Activated T-helper 2 cell treated with anti-CD3 and anti-CD28 coated beads, Interferon-gamma antibody, Interleukin-2, Interleukin-4, amounts not matched to agents 10 μg/mL and 5 μg/mL and 100 μg/mL, durations not matched to agents 14 hours and 24 hours and 36 hours (primary cell): ENCODE measurements at regions of chr4 and their contacts with region 1.

Region 1: DNA sequence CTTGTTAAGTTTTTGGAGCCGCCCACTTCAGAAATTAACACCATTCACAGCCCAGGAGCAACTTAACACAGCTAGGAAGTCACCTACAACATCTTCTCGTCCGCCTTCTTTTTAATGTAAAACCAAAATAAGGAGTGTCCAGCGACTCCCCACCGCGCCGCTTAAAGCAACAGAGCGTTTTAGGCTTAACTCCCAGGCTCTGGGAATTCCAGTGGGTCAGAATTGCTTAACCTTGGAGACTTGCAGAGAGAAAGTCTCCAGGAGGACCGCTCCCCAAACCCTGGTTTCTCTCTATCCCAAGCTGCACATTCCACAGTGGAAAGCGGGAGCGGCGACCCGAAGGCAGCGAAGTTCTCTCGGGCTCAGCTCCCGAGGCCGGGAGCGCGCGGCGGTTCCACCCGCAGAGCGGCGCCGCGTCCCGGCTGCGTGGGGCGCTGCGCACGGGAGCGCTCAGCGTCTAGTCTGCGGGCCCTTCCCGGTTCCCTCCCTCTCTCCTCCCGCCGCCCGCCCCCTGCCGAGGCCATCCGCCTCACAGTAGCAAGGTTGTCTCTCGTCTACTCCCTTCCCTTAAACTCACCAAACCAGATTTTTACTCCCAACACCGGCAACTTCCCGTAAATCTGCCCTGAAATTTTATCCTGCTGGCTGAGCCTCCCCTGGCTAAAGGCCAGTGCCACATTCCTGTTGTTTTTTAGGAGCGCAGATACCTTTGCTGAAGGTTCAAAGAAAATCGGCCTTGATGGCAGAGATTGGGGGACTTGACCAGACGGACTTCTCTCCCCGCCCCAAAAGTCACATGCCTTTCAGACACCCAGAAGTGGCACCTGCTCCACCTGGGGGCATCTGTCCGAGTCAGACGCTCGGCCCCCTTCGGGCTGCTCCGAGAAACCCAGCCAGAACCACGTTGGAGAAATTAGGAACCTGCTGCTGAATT is at the start of gene RBM47:
- DNase-seq: no peak
- H3K4me3 Mint-ChIP-seq: peak within 1 kb of the TSS; percentile 98
- H3K27ac Mint-ChIP-seq: peak within 1 kb of the TSS; percentile 90
- H3K4me1 Mint-ChIP-seq: peaks cover 41% of the 10 kb centered on the region
- H3K27me3 Mint-ChIP-seq: peaks cover 9% of the 10 kb centered on the region
- total RNA-seq, gene RBM47: 32.9 and 34.8 TPM in 2 replicates

Region 2: DNA sequence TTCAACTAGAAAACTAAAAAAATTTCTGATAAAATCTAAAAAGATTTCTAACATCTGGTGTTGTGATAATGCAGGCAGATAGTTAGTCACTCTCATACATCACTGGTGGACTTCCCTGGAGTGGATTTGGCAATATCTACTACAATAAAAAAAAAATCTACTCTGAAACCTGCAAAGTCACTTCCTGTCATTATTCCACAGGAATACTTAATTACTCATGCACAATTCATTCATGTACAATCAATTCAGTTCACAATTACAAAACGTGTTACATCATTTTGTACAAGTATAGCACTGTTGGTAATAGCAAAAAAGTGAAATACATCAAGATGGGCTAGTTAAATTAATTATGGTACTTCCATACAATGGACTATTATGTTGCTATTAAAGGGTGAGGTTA is 449.3 kb before region 1 on chr4:
- intact Hi-C with region 1: loop called (anchors 5 kb)
- DNase-seq: no peak
- H3K4me3 Mint-ChIP-seq: no peak overlapping the region
- H3K27ac Mint-ChIP-seq: no peak overlapping the region
- H3K4me1 Mint-ChIP-seq: peaks cover 29% of the 10 kb centered on the region
- H3K27me3 Mint-ChIP-seq: no peaks in the 10 kb centered on the region

Region 3: DNA sequence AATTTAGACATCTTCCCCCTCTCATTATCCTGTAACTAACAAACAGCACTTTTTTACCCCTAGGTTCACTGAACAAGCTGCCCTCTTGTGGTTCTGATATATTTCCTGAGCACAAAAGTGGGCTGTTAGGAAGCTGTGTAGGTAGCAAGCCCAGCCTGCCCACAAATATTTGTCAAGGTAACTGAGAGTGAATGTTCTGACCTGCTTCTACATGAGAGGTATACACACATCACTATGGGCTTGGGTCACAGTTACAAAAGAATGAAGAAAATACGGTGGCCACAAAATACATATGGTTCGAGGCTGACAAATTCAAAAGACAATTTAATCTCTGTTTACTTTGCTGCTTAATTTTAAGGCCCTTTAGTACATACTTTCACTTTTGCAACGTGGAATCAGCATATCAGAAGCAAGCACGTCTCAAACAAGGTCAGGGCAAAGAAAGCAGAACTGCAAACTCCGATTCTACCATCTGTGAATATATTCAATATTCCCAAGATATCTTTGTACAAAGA is 78.7 kb before region 1 on chr4:
- intact Hi-C with region 1: loop called (anchors 5 kb)
- DNase-seq: peak; percentile 21
- H3K4me3 Mint-ChIP-seq: peak overlapping the region; percentile 81
- H3K27ac Mint-ChIP-seq: peak overlapping the region; percentile 87
- H3K4me1 Mint-ChIP-seq: peaks cover 48% of the 10 kb centered on the region
- H3K27me3 Mint-ChIP-seq: no peaks in the 10 kb centered on the region

Region 4: DNA sequence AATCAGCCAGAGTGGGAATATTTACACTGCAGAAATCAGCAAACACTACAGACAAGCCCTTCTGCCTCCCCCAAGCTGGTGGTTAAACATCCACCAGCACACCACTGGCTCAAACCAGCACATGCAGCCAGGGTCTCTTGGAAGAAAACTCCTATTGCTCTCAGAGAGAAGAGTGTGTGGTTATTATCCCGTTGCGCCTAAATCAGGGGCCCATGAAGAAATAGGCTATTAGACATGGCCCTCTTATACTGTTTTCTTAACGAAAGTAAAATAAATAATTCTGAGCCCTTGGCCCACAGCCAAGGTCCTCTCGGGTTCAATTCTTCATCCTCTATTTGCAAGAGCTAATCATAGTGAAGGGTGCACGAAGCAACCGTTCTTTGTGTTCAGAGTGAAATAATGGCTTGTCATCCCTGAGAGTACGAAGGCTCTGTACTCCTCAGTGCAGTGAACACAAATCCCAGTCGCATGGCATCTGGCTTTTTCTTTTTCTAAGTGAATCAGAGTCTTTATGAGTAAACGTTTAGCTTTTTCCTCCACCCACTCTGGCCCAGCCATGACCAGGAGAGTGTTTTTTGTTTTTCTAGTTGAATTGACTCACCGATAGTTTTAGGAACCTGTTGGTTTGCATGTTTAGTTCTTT is 33.4 kb after region 1 on chr4:
- intact Hi-C with region 1: loop called (anchors 1 kb)
- DNase-seq: no peak
- H3K4me3 Mint-ChIP-seq: no peak overlapping the region
- H3K27ac Mint-ChIP-seq: peak overlapping the region; percentile 85
- H3K4me1 Mint-ChIP-seq: peaks cover 30% of the 10 kb centered on the region
- H3K27me3 Mint-ChIP-seq: no peaks in the 10 kb centered on the region

Region 5: DNA sequence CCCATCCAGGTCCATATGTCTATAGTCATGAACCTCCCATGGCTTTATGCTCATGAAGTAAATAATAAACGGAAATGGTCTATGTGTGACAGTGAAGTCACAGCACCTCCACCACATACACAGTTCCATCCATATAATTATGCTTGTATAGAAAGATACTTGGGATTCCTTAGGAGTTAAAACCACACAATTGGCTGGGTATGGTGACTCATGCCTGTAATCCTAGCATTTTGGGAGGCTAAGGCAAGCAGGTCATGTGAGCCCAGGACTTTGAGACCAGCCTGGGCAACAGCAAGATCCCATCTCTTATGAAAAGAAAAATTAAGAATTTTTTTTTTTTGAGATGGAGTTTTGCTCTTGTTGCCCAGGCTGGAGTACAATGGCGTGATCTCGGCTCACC is 55.6 kb after region 1 on chr4:
- intact Hi-C with region 1: loop called (anchors 1 kb)
- DNase-seq: no peak
- H3K4me3 Mint-ChIP-seq: no peak overlapping the region
- H3K27ac Mint-ChIP-seq: no peak overlapping the region
- H3K4me1 Mint-ChIP-seq: peaks cover 45% of the 10 kb centered on the region
- H3K27me3 Mint-ChIP-seq: no peaks in the 10 kb centered on the region